ENCODE measurements at regions of chr19 and their contacts with region 1.

Region 1: GRCh38 chr19:4815426-4816201 is 15.9 kb downstream of the TICAM1 start:
- DNase-seq: peak; percentile 35 to 87 (median 64)
- ATAC-seq: peak; percentile 89 to 94 (median 90)
- H3K4me3 ChIP-seq: peak overlapping the region; percentile 31 to 40
- H3K4me3 Mint-ChIP-seq: peak overlapping the region; percentile 69 to 81 (median 73)
- H3K27ac ChIP-seq: no peak overlapping the region
- H3K27ac Mint-ChIP-seq: peak overlapping the region; percentile 71 to 78
- H3K4me1 ChIP-seq: peaks cover 0 to 17% of the 10 kb centered on the region in 2 experiments
- H3K4me1 Mint-ChIP-seq: peaks cover 17 to 28% (median 19%) of the 10 kb centered on the region in 3 donors
- H3K27me3 ChIP-seq: no peaks in the 10 kb centered on the region
- H3K27me3 Mint-ChIP-seq: no peaks in the 10 kb centered on the region

Region 2: DNA sequence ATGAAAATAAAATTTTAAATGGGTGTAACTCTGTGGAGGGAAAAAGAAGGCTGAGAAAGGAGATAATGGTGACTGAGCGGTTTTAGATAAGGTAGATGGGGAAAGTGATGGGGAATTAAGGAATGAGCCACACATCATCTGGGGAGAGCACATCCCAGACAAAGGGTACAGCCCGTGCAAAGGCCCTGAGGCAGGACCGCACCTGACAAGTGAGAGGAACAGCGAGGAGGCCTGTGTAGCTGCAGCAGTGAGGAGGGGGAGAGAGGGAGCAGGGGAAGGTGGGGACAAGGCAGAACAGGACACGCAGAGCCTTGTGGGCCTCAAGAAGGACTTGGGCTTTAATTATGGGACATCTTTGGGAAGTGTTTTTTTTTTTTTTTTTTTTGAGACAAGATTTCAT is 1592.9 kb before region 1 on chr19:
- CTCF ChIA-PET with region 1: no interaction called
- POLR2A ChIA-PET with region 1: interaction called in 1 of 2 experiments, 19 read pairs
- DNase-seq: no peak
- ATAC-seq: no peak
- H3K4me3 ChIP-seq: no peak overlapping the region
- H3K4me3 Mint-ChIP-seq: no peak overlapping the region
- H3K27ac ChIP-seq: no peak overlapping the region
- H3K27ac Mint-ChIP-seq: no peak overlapping the region
- H3K4me1 ChIP-seq: peaks cover 2 to 7% of the 10 kb centered on the region in 2 experiments
- H3K4me1 Mint-ChIP-seq: no peaks in the 10 kb centered on the region
- H3K27me3 ChIP-seq: peaks cover 0 to 53% of the 10 kb centered on the region in 2 experiments
- H3K27me3 Mint-ChIP-seq: peaks cover 4 to 25% of the 10 kb centered on the region in 2 donors

Region 3: DNA sequence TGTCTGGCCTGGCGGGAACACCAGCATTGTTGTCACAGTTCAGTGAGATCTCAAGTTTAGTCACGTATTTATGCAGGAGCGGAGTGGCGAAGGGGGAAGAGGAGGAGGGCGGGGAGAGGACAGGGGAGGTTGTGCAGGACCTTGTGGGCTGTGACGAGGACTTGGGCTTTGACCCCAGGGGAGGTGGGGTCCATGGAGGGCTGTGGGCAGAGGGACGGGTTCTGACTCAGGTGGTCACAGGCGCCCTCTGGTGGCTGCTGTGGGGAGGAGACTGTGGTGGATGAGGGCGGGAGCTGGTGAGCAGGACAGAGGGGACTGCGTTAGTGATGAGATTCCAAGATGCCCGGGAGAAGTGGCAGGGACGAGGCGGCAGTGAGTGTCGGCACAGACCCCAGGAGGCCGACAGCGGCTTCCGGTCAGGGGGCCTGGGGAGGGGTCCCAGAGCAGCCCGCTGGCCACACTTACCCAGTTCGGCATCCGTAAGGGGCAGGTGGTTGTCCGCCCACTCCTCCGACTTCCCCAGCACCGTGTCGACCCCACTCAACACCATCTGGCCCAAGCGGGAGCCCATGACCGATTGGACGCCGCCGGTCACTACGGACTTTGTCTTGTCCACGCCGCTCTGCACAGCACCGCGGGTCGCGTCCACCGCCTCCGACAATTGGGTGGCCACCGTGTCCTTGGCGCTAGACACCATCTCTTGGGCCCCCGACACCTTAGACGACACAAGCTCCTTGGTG is 36.1 kb after region 1 on chr19:
- CTCF ChIA-PET with region 1: interaction called, 3 to 13 read pairs
- POLR2A ChIA-PET with region 1: no interaction called
- DNase-seq: peak; percentile 31 to 84 (median 64)
- ATAC-seq: peak; percentile 79 to 93 (median 90)
- H3K4me3 ChIP-seq: no peak overlapping the region
- H3K4me3 Mint-ChIP-seq: no peak overlapping the region
- H3K27ac ChIP-seq: no peak overlapping the region
- H3K27ac Mint-ChIP-seq: no peak overlapping the region
- H3K4me1 ChIP-seq: peaks cover 0 to 3% of the 10 kb centered on the region in 2 experiments
- H3K4me1 Mint-ChIP-seq: peaks cover 0 to 3% (median 0%) of the 10 kb centered on the region in 3 donors
- H3K27me3 ChIP-seq: no peaks in the 10 kb centered on the region
- H3K27me3 Mint-ChIP-seq: no peaks in the 10 kb centered on the region

Measured in T-cell (primary cell).